CD4-positive, alpha-beta memory T cell (primary cell): ENCODE measurements at regions of chr7 and their contacts with region 1.

Region 1: GRCh38 chr7:127585044-127585953 is at the start of gene GCC1:
- DNase-seq: peak; percentile 90 to 95 (median 91)
- H3K4me3 ChIP-seq: peak within 1 kb of the TSS; percentile 80 to 90
- H3K4me3 Mint-ChIP-seq: peak within 1 kb of the TSS; percentile 89 to 96 (median 92)
- H3K27ac ChIP-seq: peak within 1 kb of the TSS; percentile 89
- H3K27ac Mint-ChIP-seq: peak within 1 kb of the TSS; percentile 88 to 97 (median 95)
- H3K4me1 ChIP-seq: peaks cover 77% of the 10 kb centered on the region
- H3K4me1 Mint-ChIP-seq: peaks cover 41 to 87% (median 74%) of the 10 kb centered on the region in 4 donors
- H3K27me3 ChIP-seq: no peaks in the 10 kb centered on the region
- H3K27me3 Mint-ChIP-seq: no peaks in the 10 kb centered on the region
- total RNA-seq, gene GCC1: 29.1 to 30.0 TPM

Region 2: DNA sequence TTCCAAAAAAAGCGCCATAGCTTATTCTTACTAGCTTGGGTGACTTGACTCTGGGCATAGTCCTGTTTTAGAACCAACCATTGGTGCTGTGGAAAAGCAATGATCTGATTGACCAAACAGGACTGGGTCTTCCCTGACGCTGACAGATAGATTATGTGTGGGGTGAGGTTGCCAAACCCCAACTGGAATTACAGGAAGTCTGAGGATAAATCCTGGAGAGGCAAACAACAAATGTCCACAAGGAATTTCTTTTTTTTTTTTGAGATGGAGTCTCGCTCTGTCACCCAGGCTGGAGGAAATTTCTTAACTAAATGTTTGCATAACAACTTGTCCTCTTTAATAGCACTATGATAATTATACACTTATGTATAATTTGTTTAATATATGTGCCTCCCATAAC is 19.1 kb before region 1 on chr7:
- CTCF ChIA-PET with region 1: no interaction called
- POLR2A ChIA-PET with region 1: no interaction called
- intact Hi-C with region 1: no loop called
- DNase-seq: no peak
- H3K4me3 ChIP-seq: no peak overlapping the region
- H3K4me3 Mint-ChIP-seq: no peak overlapping the region
- H3K27ac ChIP-seq: no peak overlapping the region
- H3K27ac Mint-ChIP-seq: no peak overlapping the region
- H3K4me1 ChIP-seq: no peaks in the 10 kb centered on the region
- H3K4me1 Mint-ChIP-seq: no peaks in the 10 kb centered on the region
- H3K27me3 ChIP-seq: no peaks in the 10 kb centered on the region
- H3K27me3 Mint-ChIP-seq: no peaks in the 10 kb centered on the region

Region 3: GRCh38 chr7:127651556-127652332 is 66.4 kb after region 1 on chr7 and contains the start of gene SND1:
- CTCF ChIA-PET with region 1: no interaction called
- POLR2A ChIA-PET with region 1: interaction called, 37 read pairs
- intact Hi-C with region 1: loop called (anchors 1 kb)
- DNase-seq: peak; percentile 98 to 100 (median 100)
- H3K4me3 ChIP-seq: peak within 1 kb of the TSS; percentile 89 to 95
- H3K4me3 Mint-ChIP-seq: peak within 1 kb of the TSS; percentile 94 to 99 (median 98)
- H3K27ac ChIP-seq: peak within 1 kb of the TSS; percentile 93
- H3K27ac Mint-ChIP-seq: peak within 1 kb of the TSS in 5 of 7 donors; percentile 99 to 100 (median 100)
- H3K4me1 ChIP-seq: peaks cover 51% of the 10 kb centered on the region
- H3K4me1 Mint-ChIP-seq: peaks cover 32 to 58% (median 47%) of the 10 kb centered on the region in 4 donors
- H3K27me3 ChIP-seq: no peaks in the 10 kb centered on the region
- H3K27me3 Mint-ChIP-seq: no peaks in the 10 kb centered on the region
- total RNA-seq, gene SND1: 206 to 223 TPM

Region 4: DNA sequence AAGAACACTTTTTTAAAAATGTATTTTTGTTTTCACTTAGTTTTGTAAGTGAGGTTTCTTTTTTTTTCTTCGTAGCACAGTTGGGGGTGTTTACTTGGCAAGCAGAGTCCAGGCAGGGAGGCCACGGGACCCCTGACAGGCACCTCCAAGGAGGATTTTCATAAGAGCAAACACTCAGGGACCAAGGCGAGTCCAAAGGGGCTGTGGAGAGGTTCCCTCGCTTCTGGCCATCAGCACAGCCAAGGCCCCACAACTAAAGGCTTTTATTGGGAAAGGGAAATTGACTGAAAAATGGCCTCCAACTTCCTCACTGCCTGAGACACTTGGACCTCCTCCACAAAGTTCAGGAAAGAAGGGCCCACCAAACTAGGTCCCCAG is 272.2 kb after region 1 on chr7:
- CTCF ChIA-PET with region 1: no interaction called
- POLR2A ChIA-PET with region 1: no interaction called
- intact Hi-C with region 1: loop called (anchors 2 kb)
- DNase-seq: peak in 1 of 5 donors; percentile 16
- H3K4me3 ChIP-seq: no peak overlapping the region
- H3K4me3 Mint-ChIP-seq: peak overlapping the region in 1 of 8 donors; percentile 10
- H3K27ac ChIP-seq: no peak overlapping the region
- H3K27ac Mint-ChIP-seq: peak overlapping the region in 1 of 7 donors; percentile 25
- H3K4me1 ChIP-seq: peaks cover 50% of the 10 kb centered on the region
- H3K4me1 Mint-ChIP-seq: peaks cover 37 to 62% (median 47%) of the 10 kb centered on the region in 4 donors
- H3K27me3 ChIP-seq: no peaks in the 10 kb centered on the region
- H3K27me3 Mint-ChIP-seq: peaks cover 1 to 4% of the 10 kb centered on the region in 2 donors